ENCODE measurements at regions of chr14 and their contacts with region 1.

Region 1: DNA sequence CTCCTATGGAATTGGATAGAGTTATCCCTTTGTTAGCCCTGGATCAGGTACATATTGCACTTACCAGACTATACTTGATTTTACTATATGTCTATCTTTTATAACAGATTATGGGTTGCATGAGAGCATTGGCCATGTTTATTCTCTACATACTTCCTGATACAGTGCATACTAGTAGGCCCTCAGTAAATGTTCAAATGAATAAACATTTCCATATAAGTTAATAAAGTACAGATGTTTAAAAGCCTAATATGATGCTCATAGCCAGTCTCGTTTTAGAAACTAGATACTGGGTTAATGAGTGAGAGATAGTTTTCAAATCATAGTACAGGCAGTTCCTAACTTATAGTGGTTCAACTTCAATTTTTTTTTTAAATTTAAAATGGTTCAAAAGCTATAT is 39.5 kb upstream of the TOMM20L start:
- DNase-seq: no peak
- H3K4me3 ChIP-seq: no peak overlapping the region
- H3K27ac ChIP-seq: no peak overlapping the region
- H3K4me1 ChIP-seq: no peaks in the 10 kb centered on the region
- H3K27me3 ChIP-seq: no peaks in the 10 kb centered on the region
- CTCF ChIP-seq: no peak

Region 2: GRCh38 chr14:57609192-57610075 is 746.8 kb before region 1 on chr14:
- CTCF ChIA-PET with region 1: no interaction called
- POLR2A ChIA-PET with region 1: no interaction called
- intact Hi-C with region 1: loop called (anchors 5 kb)
- DNase-seq: no peak
- H3K4me3 ChIP-seq: no peak overlapping the region
- H3K27ac ChIP-seq: no peak overlapping the region
- H3K4me1 ChIP-seq: peaks cover 13% of the 10 kb centered on the region
- H3K27me3 ChIP-seq: no peaks in the 10 kb centered on the region
- CTCF ChIP-seq: no peak

Measured in A673 (cell line).